Caco-2 (cell line): ENCODE measurements at regions of chr19 and their contacts with region 1.

Region 1: DNA sequence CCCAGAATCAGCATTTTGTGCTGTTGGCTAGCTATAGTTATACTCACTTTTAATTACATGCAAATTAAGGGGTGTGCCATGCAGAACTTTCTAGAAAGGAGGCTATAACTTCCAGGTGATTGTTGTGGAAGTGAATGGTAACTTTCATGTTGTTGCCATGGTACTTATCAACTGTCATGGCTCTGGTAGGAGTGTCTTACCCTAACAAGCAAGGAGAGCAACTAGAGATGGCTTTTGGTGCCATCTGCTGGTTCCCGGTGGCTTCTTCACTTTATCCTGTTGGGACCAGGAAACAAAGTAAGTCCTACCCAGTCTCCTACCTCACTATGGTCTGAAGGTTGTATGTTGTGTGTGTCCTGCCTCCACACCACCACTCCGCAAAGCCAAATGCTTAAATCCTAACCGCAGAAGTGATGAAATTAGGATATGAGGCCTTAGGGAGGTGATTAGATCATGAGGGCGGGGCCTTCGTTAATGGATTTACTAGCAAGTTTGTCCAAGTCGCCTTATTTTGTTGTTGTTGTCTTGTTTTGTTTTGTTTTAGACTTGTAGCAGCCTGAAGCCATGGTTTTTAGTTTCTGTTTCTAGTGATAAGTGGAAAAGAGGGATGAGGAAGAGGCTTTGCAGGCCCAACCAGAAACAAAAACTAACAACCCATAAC is 22.6 kb downstream of the FBXL12 start:
- DNase-seq: peak; percentile 84 to 85
- H3K4me3 ChIP-seq: no peak overlapping the region
- H3K4me3 Mint-ChIP-seq: no peak overlapping the region
- H3K27ac Mint-ChIP-seq: peak overlapping the region; percentile 22
- H3K4me1 ChIP-seq: no peaks in the 10 kb centered on the region; the same call in 1 of the 2 replicates
- H3K4me1 Mint-ChIP-seq: no peaks in the 10 kb centered on the region
- H3K27me3 ChIP-seq: no peaks in the 10 kb centered on the region
- H3K27me3 Mint-ChIP-seq: no peaks in the 10 kb centered on the region
- CTCF ChIP-seq: peak; percentile 70 to 73

Region 2: DNA sequence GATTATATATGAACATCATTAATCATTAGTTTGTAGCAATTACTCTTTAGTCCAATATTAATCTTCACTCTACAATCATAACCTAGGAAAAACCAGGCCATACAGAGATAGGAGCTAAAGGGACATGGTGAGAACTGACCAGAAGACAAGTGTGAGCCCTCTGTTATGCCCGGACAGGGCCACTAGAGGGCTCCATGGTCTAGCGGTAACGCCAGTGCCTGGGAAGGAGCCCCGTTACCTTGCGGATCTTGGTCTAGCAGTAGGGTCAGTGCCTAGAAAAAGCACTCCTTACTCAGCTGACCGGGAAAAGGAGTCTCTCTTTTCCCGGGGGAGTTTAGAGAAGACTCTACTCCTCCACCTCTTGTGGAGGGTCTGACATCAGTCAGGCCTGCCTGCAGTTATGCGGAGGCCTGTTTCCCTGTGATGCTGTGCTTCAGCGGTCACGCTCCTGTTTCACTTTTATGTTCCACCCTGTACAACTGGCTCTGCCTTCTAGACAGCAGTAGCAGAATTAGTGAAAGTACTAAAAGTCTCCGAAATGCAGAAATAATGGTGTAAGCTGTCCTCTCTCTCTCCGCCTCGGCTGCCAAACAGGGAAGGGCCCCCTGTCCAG is 590.6 kb before region 1 on chr19:
- CTCF ChIA-PET with region 1: no interaction called
- POLR2A ChIA-PET with region 1: no interaction called
- intact Hi-C with region 1: loop called (anchors 5 kb)
- DNase-seq: peak; percentile 50 to 68
- H3K4me3 ChIP-seq: no peak overlapping the region
- H3K4me3 Mint-ChIP-seq: no peak overlapping the region
- H3K27ac Mint-ChIP-seq: no peak overlapping the region
- H3K4me1 ChIP-seq: no peaks in the 10 kb centered on the region
- H3K4me1 Mint-ChIP-seq: no peaks in the 10 kb centered on the region
- H3K27me3 ChIP-seq: no peaks in the 10 kb centered on the region
- H3K27me3 Mint-ChIP-seq: peaks cover 4% of the 10 kb centered on the region
- CTCF ChIP-seq: peak; percentile 64 to 78

Region 3: DNA sequence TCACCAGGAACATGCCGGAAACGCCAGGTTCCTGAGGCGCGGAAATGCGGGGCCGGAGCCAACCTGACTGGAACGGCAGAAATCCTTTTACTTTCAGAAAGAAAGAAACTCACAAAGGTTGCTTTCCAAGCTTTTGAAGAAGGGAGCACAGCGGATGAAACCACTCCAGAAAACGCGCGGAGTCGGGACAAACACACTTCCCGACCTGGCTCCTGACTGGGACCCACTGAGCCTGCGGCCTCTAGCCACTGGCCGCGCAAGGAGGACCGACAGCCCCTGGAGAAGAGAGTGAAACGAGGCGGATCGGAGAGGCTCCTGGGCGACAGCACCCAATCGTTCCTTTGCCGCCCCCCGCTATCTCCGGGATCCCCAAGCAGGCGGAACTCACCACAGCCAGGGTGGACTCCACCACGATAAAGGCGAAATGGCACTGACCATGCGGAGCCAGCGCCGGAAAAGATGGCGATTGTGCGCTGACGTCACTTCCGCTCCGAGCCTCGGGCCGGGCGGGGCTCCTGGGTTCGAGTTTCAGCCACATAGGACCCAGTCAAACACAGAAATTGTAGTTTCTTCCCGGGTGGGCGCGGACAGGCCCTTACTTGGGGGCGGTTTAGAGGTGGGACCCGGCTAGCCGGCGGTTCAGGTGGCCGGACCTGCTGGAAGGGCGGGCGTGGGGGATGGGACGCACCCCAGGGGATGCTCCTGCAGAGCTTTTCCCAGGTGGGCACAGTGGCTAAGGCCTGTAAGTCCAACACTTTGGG is 212.0 kb before region 1 on chr19 and contains the start of gene ZNF121:
- CTCF ChIA-PET with region 1: no interaction called
- POLR2A ChIA-PET with region 1: no interaction called
- intact Hi-C with region 1: loop called (anchors 1 kb)
- DNase-seq: peak; percentile 81 to 85
- H3K4me3 ChIP-seq: peak within 1 kb of the TSS; percentile 74
- H3K4me3 Mint-ChIP-seq: peak within 1 kb of the TSS; percentile 90
- H3K27ac Mint-ChIP-seq: peak within 1 kb of the TSS; percentile 98
- H3K4me1 ChIP-seq: no peaks in the 10 kb centered on the region
- H3K4me1 Mint-ChIP-seq: peaks cover 7% of the 10 kb centered on the region
- H3K27me3 ChIP-seq: no peaks in the 10 kb centered on the region
- H3K27me3 Mint-ChIP-seq: no peaks in the 10 kb centered on the region
- CTCF ChIP-seq: no peak
- total RNA-seq, gene ZNF121: 35.5 and 38.4 TPM in 2 replicates

Region 4: GRCh38 chr19:9645472-9645871 is 150.8 kb before region 1 on chr19:
- CTCF ChIA-PET with region 1: interaction called, 3 read pairs
- POLR2A ChIA-PET with region 1: no interaction called
- intact Hi-C with region 1: loop called (anchors 1 kb)
- DNase-seq: peak in 1 of 2 experiments; percentile 11
- H3K4me3 ChIP-seq: no peak overlapping the region
- H3K4me3 Mint-ChIP-seq: no peak overlapping the region
- H3K27ac Mint-ChIP-seq: no peak overlapping the region
- H3K4me1 ChIP-seq: no peaks in the 10 kb centered on the region
- H3K4me1 Mint-ChIP-seq: no peaks in the 10 kb centered on the region
- H3K27me3 ChIP-seq: no peaks in the 10 kb centered on the region
- H3K27me3 Mint-ChIP-seq: no peaks in the 10 kb centered on the region
- CTCF ChIP-seq: no peak

Region 5: DNA sequence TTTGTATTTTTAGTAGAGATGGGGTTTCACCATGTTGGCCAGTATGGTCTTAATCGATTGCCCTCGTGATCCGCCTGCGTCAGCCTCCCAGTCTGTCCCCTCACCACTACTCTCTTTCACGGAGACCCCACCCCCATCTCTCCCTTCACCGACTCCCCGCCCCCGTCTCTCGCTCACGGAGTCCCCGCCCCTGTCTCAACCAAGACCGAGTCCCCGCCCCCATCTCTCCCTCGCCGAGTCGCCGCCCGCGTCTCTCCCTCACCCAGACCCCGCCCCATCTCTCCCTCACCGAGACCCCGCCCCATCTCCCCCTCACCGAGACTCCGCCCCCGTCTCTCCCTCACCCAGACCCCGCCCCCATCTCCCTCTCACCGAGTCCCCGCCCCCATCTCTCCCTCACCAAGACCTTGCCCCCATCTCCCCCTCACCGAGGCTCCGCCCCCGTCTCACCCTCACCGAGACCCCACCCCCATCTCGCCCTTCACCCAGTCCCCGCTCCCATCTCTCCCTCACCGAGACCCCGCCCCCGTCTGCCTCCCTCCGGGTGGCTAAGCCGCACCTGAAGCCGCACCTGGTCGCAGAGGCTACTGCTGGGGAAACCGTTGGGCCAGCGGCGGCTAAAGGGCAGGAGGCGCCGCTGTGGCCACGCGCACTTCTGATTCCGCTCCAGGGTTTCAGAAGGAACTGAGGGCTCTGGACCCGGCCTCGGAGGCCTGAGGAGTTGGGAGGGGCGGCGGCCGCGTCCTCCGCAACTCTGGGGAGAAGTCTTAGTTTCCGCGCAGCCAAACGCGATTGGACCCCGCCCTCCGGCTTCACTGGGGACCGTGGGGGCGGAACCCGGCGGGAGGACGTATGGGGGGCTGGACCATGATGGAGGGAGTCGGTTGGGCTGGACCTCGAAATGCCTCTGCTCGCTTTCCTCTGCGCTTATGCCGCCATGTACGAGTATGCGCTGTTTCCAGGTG is 10.6 kb before region 1 on chr19:
- CTCF ChIA-PET with region 1: no interaction called
- POLR2A ChIA-PET with region 1: no interaction called
- intact Hi-C with region 1: loop called (anchors 1 kb)
- DNase-seq: peak; percentile 98
- H3K4me3 ChIP-seq: peak overlapping the region; percentile 49
- H3K4me3 Mint-ChIP-seq: peak overlapping the region; percentile 90
- H3K27ac Mint-ChIP-seq: peak overlapping the region; percentile 100
- H3K4me1 ChIP-seq: peaks cover 24% of the 10 kb centered on the region
- H3K4me1 Mint-ChIP-seq: peaks cover 22% of the 10 kb centered on the region
- H3K27me3 ChIP-seq: no peaks in the 10 kb centered on the region
- H3K27me3 Mint-ChIP-seq: no peaks in the 10 kb centered on the region
- CTCF ChIP-seq: no peak